ENCODE measurements at regions of chr9 and their contacts with region 1.

Region 1: DNA sequence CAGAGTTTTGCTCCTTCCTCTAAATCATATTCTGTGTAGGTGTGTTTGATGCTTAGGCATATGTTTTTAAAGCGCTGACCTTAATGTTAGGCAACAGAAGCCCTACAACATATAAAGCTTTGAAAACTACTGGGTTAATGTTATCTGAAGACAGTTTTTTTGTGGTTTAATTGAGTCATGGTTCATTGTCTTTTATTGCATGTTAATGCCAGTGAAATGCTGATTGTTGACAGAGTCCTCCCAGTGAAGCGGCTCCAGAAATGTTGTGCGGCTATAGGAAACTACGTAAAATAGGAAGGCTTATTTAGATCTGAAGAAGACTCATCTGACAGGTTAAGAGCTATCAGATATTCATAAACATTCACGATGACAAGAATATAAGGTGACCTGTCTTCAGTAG is 424.6 kb downstream of the CCDC171 start:
- DNase-seq: no peak
- ATAC-seq: no peak
- H3K4me3 ChIP-seq: no peak overlapping the region
- H3K4me3 Mint-ChIP-seq: no peak overlapping the region
- H3K27ac ChIP-seq: no peak overlapping the region
- H3K27ac Mint-ChIP-seq: no peak overlapping the region
- H3K4me1 ChIP-seq: no peaks in the 10 kb centered on the region
- H3K4me1 Mint-ChIP-seq: no peaks in the 10 kb centered on the region
- H3K27me3 ChIP-seq: no peaks in the 10 kb centered on the region
- H3K27me3 Mint-ChIP-seq: no peaks in the 10 kb centered on the region
- CTCF ChIP-seq: no peak

Region 2: GRCh38 chr9:16143947-16144890 is 166.8 kb after region 1 on chr9:
- CTCF ChIA-PET with region 1: no interaction called
- POLR2A ChIA-PET with region 1: no interaction called
- intact Hi-C with region 1: loop called in 1 of 2 experiments (anchors 5 kb)
- DNase-seq: no peak
- ATAC-seq: no peak
- H3K4me3 ChIP-seq: no peak overlapping the region
- H3K4me3 Mint-ChIP-seq: no peak overlapping the region
- H3K27ac ChIP-seq: no peak overlapping the region
- H3K27ac Mint-ChIP-seq: no peak overlapping the region
- H3K4me1 ChIP-seq: no peaks in the 10 kb centered on the region
- H3K4me1 Mint-ChIP-seq: no peaks in the 10 kb centered on the region
- H3K27me3 ChIP-seq: no peaks in the 10 kb centered on the region
- H3K27me3 Mint-ChIP-seq: no peaks in the 10 kb centered on the region
- CTCF ChIP-seq: no peak

Region 3: DNA sequence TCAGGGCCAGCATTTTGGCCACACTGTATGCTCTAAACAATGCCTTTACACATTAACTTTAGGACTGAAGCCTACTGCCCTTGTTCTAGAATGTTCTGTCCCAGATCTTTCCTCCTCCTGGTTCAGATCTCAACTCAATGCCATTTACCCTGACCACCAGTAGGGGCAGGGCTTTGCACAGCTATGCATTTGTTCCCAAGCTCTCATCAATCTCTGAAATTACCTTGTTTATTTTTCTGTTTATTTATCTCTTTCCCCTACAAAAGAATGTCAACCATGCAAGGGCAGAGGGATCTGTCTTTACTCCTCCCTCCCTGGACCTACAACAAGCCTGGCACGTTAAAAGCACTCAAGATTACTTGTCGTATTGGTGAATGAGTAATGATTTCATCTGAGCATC is 280.2 kb after region 1 on chr9:
- CTCF ChIA-PET with region 1: no interaction called
- POLR2A ChIA-PET with region 1: no interaction called
- intact Hi-C with region 1: no loop called
- DNase-seq: no peak
- ATAC-seq: no peak
- H3K4me3 ChIP-seq: no peak overlapping the region
- H3K4me3 Mint-ChIP-seq: no peak overlapping the region
- H3K27ac ChIP-seq: no peak overlapping the region
- H3K27ac Mint-ChIP-seq: no peak overlapping the region
- H3K4me1 ChIP-seq: peaks cover 8% of the 10 kb centered on the region
- H3K4me1 Mint-ChIP-seq: peaks cover 9% of the 10 kb centered on the region
- H3K27me3 ChIP-seq: no peaks in the 10 kb centered on the region
- H3K27me3 Mint-ChIP-seq: peaks cover 6% of the 10 kb centered on the region
- CTCF ChIP-seq: no peak